PC-3 (cell line): ENCODE measurements at regions of chr13 and their contacts with region 1.

Region 1: DNA sequence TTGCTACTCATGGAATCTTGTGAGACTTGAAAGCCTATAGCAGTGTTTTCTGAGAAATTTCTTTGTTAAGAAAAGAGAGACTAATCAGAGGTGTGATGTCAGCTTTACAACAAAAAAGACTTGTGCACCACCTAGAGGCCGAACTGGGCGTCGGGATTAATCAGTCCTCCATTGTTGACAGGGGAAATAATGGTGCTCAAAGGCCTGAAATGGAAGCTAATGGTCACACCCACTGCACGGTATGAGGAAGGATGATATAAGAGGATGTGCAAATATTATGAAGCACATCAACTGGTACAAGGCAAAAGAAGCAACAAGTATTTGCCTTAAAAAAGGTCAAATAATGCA is 480.2 kb upstream of the MIR17HG start:
- DNase-seq: peak; percentile 86
- ATAC-seq: peak; percentile 73
- H3K4me3 ChIP-seq: no peak overlapping the region
- H3K27ac ChIP-seq: peak overlapping the region; percentile 91
- H3K4me1 ChIP-seq: peaks cover 24% of the 10 kb centered on the region
- H3K27me3 ChIP-seq: no peaks in the 10 kb centered on the region
- CTCF ChIP-seq: peak; percentile 82

Region 2: DNA sequence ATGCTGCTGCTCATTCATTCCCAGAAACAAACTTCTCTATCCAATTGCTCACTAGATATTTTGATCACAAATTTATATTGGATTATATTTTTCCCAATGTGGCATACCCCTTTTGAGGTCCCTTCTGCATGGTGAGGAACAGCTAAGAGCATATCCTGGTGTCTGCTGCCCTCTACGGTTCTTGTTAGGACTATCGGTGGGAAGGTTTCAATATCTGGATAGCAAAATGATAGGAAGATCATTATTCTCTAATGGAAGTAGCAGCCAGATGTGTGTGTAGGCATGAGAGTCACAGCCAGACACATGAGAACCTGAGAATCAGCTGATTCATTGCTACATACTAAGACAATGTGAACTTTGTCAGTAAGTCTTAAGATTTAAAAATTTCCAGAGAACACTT is 942.2 kb before region 1 on chr13:
- CTCF ChIA-PET with region 1: no interaction called
- POLR2A ChIA-PET with region 1: no interaction called
- intact Hi-C with region 1: loop called (anchors 5 kb)
- DNase-seq: peak; percentile 53
- ATAC-seq: peak; percentile 80
- H3K4me3 ChIP-seq: no peak overlapping the region
- H3K27ac ChIP-seq: no peak overlapping the region
- H3K4me1 ChIP-seq: no peaks in the 10 kb centered on the region; the same call in 1 of the 2 replicates
- H3K27me3 ChIP-seq: no peaks in the 10 kb centered on the region
- CTCF ChIP-seq: peak; percentile 79

Region 3: GRCh38 chr13:90455823-90456222 is 411.5 kb before region 1 on chr13:
- CTCF ChIA-PET with region 1: interaction called, 3 read pairs
- POLR2A ChIA-PET with region 1: no interaction called
- intact Hi-C with region 1: loop called (anchors 1 kb)
- DNase-seq: peak; percentile 25
- ATAC-seq: peak; percentile 54
- H3K4me3 ChIP-seq: no peak overlapping the region
- H3K27ac ChIP-seq: no peak overlapping the region
- H3K4me1 ChIP-seq: peaks cover 6% of the 10 kb centered on the region
- H3K27me3 ChIP-seq: no peaks in the 10 kb centered on the region
- CTCF ChIP-seq: peak; percentile 32

Region 4: DNA sequence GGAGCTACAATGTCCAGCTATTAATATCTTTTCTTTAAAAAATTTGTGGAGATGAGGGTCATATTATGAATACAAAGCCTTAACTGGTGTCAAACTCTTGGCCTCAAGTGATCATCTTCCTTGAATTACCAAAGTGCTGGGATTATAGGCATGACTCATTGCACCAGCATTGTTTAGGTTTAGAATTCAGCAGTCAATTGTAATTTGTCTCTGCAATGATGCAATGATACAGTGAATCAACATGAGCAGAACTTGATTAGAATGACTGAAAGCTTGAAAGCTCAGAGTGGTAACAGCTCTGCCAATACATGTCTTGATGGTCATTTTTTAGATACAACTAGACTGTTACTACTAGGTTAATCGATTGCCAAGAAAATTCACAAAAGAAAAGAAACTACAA is 272.6 kb before region 1 on chr13:
- CTCF ChIA-PET with region 1: no interaction called
- POLR2A ChIA-PET with region 1: no interaction called
- intact Hi-C with region 1: loop called (anchors 10 kb)
- DNase-seq: peak; percentile 62
- ATAC-seq: peak; percentile 58; the same call in 1 of the 2 replicates
- H3K4me3 ChIP-seq: no peak overlapping the region
- H3K27ac ChIP-seq: no peak overlapping the region
- H3K4me1 ChIP-seq: no peaks in the 10 kb centered on the region; the same call in 1 of the 2 replicates
- H3K27me3 ChIP-seq: no peaks in the 10 kb centered on the region
- CTCF ChIP-seq: no peak

Region 5: GRCh38 chr13:90839061-90839460 is 28.2 kb before region 1 on chr13:
- CTCF ChIA-PET with region 1: no interaction called
- POLR2A ChIA-PET with region 1: no interaction called
- intact Hi-C with region 1: loop called (anchors 1 kb)
- DNase-seq: peak; percentile 82
- ATAC-seq: peak; percentile 79
- H3K4me3 ChIP-seq: peak overlapping the region; percentile 35; the same call in 1 of the 2 replicates
- H3K27ac ChIP-seq: peak overlapping the region; percentile 98
- H3K4me1 ChIP-seq: peaks cover 30% of the 10 kb centered on the region
- H3K27me3 ChIP-seq: no peaks in the 10 kb centered on the region
- CTCF ChIP-seq: no peak

Region 6: DNA sequence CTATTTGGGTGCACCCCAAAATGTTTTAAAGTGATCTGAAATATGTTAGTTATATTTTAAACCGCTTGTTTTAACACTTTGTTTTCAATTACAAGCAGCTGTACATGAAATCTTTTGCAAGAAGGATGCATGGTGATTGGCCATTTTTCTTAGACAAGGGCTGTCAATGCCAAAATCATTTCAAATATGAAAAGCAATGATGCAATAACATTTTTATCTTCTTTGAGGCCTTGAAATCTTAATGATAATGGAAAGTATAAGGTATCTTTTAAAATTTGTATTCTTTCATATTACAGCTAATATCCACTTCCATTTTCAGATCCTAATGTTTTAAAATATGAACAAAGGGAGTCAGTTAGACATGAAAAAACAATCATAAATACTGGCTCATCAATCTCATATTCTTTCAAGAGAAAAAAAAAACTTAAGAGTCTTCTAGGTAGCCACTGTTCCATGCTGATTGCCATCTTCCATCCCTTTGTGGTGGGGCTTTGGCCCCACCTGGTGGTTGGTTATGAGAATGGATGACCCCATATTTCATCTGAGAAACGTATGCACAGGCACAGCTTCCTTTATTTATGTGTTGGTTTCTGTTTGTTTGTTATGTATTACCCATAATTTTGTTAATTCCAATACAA is 149.8 kb after region 1 on chr13:
- CTCF ChIA-PET with region 1: interaction called, 7 read pairs
- POLR2A ChIA-PET with region 1: no interaction called
- intact Hi-C with region 1: loop called (anchors 5 kb)
- DNase-seq: peak; percentile 78
- ATAC-seq: peak; percentile 99
- H3K4me3 ChIP-seq: peak overlapping the region; percentile 52
- H3K27ac ChIP-seq: no peak overlapping the region
- H3K4me1 ChIP-seq: no peaks in the 10 kb centered on the region
- H3K27me3 ChIP-seq: no peaks in the 10 kb centered on the region
- CTCF ChIP-seq: peak; percentile 83